ENCODE measurements at regions of chr16 and their contacts with region 1.

Region 1: GRCh38 chr16:58011652-58012051 is 10.4 kb downstream of the USB1 start:
- DNase-seq: no peak
- CTCF ChIP-seq: no peak

Region 2: DNA sequence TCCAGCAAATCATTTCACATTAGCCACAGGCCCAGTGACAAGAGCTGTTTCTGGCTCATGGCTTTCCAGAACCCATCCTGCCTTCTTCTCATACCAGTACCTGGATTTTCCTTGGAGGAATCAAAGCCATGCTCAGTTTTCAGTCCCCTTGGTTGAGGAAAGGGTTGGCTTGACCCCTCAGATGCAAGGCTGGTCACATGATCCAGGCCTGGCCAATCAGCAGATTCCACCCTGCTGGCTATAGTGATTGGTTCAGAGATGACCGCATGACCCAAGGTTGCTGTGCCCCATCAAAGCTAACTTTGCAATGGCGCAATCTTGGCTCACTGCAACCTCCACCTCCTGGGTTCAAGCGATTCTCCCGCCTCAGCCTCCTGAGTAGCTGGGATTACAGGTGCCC is 58.9 kb after region 1 on chr16:
- in situ Hi-C with region 1: no loop called
- DNase-seq: no peak
- CTCF ChIP-seq: no peak

Region 3: DNA sequence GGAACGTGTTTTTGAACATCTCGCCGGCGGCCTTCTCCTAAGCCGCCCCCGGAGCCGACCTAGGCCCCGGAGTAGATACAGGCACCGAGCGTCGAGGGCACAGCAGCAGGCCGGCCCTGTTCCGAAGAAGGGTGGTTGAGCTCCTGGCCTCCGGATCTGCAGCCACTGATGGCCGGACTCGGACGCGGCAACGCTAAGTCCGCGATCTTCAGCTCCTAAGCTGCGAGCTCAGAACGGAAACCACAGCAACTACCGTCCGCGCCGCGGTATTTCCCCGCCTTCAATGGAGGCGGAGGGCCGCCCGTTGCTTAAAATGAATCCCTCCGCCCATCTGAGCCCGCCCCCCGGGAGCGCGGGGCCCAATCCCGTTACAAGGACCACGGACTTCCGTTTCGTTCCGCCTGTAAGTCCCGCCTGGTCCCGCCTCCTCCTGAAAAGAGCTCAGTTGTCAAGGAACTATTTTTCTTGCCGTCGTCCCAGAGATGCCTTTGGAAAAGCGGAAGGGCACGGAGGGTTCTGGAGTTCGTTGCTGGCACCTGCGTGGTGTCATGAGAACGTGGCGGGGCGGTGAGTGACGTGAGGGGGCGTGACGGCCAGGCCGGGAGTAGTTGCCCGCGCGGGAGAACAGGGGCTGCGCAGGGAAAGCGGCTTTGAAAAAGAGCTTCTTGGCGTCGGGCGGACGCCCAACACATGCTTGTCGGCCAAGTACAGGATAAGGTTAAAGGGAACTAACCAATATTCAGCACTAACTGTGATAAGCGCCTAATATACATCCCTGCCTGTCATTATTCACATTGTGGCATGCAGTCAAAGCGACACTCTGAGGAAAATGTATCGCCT is 117.7 kb after region 1 on chr16 and contains the start of gene CFAP20:
- in situ Hi-C with region 1: loop called (anchors 10 kb)
- DNase-seq: peak; percentile 95
- CTCF ChIP-seq: no peak

Region 4: DNA sequence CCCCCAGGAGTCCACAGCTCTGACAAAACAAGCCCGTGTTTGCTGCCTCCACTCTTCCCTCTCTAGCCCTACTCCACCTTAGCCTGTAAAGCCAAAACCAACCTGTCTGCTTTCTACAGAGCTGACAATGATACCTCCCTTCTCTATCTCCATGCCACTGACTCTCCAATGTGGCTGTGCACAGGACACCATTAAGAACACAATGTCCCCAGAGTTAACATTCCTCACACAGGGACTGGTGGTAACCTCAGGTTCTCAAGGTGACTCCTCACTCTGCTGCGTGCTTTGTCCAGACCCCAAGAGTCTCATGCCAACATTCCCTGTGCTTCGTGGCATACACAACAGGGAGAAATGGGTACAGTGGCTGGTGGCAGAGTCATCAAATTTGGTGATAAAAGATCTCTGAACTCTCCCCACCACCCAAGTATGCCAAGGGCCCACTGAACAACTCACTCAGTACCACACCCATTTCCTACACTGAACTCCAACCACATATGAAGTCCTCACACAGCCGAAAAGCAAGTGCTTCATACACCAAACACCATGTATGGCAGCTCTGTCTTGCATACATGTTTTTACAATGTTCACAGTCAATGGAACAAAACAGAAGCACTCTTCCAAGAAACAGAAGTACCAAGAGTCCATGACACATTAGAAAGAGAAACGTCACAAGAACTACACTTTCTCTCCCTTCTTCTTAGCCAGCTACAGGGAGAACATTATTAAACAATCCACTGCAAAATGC is 165.1 kb after region 1 on chr16:
- in situ Hi-C with region 1: no loop called
- DNase-seq: no peak
- CTCF ChIP-seq: no peak

Measured in GM13976 (cell line).